GM12878 (cell line): ENCODE measurements at regions of chr1 and their contacts with region 1.

Region 1: DNA sequence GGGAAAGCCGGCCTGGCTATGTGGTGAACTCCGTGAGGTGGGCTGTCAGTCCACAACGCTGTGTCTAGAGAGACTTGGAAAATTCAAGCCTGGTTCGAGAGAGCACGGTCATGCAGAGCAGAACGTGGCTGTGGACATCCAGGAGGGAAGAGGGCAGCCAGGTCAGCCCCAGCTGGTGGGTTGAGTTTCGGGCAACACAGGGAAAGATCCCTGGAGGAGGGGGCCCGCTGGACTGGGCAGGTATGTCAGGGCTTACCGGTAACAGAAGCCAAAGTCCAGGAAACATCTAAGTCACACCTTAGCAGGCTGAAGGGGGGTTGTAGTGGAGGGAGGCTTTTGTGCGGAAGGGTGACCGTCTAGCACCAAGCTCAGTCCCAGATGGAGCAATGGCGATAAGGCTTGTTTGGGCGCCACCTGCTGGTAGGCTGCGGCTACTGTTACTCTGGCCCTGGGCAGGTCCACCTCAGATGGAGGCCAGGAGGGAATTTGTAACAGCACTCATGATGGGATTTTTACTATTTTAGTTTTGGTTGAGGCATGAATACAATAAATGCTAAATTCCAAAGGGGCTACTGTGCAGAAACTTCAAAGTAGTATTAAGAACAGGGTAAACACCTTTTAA is 143.3 kb upstream of the ZNF644 start:
- DNase-seq: peak; percentile 11
- ATAC-seq: peak; percentile 99
- H3K4me3 ChIP-seq: no peak overlapping the region
- H3K27ac ChIP-seq: no peak overlapping the region
- H3K4me1 ChIP-seq: no peaks in the 10 kb centered on the region
- H3K27me3 ChIP-seq: no peaks in the 10 kb centered on the region; a peak in 1 of 4 replicates
- CTCF ChIP-seq: peak; percentile 92 to 99 (median 95)
- EP300 ChIP-seq: no peak
- POLR2A ChIP-seq: no peak
- RAD21 ChIP-seq: peak; percentile 88

Region 2: DNA sequence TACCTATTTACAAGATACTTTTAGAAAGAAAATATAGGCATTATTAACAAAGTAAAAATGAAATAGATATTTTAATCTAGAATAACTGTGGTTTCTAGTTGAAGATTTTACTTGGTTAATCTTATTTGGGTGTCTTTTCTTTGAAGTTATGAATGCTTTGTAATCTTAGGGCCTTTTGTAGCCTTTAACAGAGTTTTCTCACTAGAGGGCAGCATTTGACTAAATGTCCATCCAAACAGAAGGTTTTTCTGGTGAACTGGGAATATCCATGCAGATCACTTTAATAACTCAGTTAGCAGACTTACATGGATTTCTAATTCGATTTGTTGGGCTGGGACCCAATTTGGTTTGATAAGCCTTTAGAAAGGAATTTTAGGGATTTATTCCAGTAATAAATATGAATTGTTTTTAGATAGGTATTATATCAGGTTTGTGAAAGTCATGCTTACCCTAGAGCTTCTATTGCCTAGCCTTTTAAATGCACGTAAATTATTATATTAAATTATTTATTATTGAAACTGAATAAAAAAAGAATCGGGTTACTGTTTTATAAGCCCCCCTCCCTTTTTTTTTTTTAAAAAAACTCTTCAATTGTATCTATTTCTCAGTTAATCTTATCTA is 1050.5 kb before region 1 on chr1:
- CTCF ChIA-PET with region 1: interaction called, 18 read pairs
- POLR2A ChIA-PET with region 1: no interaction called
- RAD21 ChIA-PET with region 1: interaction called, 13 read pairs
- SMC1A ChIA-PET with region 1: interaction called, 10 read pairs
- in situ Hi-C with region 1: loop called (anchors 25 kb)
- intact Hi-C with region 1: loop called (anchors 5 kb)
- DNase-seq: peak; percentile 8
- ATAC-seq: peak; percentile 65
- H3K4me3 ChIP-seq: no peak overlapping the region
- H3K27ac ChIP-seq: no peak overlapping the region
- H3K4me1 ChIP-seq: no peaks in the 10 kb centered on the region
- H3K27me3 ChIP-seq: no peaks in the 10 kb centered on the region
- CTCF ChIP-seq: peak; percentile 55 to 73 (median 72); a peak in 5 of 6 replicates
- EP300 ChIP-seq: no peak
- POLR2A ChIP-seq: no peak
- RAD21 ChIP-seq: peak; percentile 93

Region 3: DNA sequence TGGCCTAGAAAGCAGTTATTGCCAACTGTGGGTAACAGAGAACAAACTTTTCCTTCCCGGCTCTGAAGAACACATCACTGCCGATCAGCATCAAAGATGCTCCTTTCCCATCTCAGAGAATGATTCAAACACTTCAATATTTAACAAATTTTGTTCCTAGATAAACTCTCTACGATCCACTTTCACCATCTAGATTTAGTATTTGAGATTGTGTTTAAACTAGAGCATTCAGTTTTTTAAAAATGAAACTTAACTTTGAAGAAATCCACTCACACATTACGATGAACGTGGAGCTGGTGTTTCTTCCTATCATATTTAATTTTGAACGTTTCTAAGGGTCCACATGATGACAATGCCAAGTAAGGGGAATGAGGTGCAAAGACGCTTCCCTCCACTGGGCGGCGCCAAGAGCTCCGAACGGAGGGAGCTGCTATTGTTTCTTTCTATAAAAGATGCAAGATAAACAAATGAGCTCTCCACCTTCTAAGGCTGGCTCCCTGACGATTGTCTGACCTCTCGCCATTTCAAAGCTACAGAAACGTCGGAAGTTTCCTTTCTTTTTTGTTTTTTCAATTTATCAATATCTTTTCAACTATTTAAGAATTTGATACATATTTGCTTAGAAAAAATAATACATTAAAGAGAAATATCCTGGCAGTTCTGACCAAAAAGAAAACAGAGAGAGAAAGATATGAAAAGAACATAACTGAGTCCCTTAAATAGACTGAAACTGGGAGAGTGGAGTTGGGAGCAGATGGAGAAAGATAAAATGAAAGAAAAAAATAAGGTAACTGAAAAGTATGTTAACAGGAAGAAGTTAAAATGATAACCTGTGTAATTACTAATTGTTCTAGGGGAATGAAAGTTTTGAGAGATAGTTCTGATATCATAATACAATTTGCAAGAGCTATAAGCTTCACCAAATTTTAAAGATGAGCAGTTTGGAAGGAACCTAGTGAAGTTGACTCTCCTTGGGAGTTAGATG is 443.6 kb before region 1 on chr1:
- CTCF ChIA-PET with region 1: interaction called, 61 read pairs
- POLR2A ChIA-PET with region 1: no interaction called
- RAD21 ChIA-PET with region 1: interaction called, 28 read pairs
- SMC1A ChIA-PET with region 1: interaction called, 47 read pairs
- in situ Hi-C with region 1: loop called (anchors 5 kb)
- intact Hi-C with region 1: loop called (anchors 1 kb)
- DNase-seq: no peak
- ATAC-seq: peak; percentile 89
- H3K4me3 ChIP-seq: no peak overlapping the region
- H3K27ac ChIP-seq: no peak overlapping the region
- H3K4me1 ChIP-seq: no peaks in the 10 kb centered on the region
- H3K27me3 ChIP-seq: peaks cover 11 to 24% of the 10 kb centered on the region in 2 experiments
- CTCF ChIP-seq: peak; percentile 87 to 91 (median 91)
- EP300 ChIP-seq: no peak
- POLR2A ChIP-seq: no peak
- RAD21 ChIP-seq: peak; percentile 72

Region 4: DNA sequence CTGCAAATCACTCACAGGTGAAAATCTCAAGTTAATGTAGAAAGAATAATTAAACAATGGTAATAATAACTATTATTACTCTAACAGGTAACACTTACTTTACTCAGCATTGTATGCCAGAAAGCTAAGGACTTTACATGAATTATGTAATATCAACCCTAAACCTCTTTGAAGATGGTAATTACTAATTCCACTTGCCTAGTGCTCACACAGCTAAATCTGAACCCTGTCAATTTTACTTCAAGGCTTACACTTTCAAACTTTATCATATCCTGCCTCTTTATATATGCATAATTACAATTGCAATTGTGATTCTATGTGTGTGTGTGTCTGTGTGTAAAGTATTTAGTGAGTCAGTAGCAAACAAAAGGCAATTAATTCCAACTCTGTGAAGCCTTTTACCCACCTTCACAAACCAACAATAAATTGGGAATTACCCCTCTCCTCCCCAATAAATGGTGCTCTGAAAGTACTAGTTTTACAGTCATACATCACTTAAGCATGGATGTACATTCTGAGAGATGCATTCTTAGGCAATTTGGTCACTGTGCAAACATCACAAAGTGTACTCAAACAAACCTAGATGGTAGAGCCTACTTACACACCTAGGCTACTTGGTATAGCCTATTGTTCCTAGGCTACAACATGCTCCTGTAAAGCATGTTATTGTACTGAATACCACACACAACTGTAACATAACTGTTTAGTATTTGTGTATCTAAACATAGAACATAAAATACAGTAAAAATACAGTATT is 149.2 kb before region 1 on chr1:
- CTCF ChIA-PET with region 1: interaction called, 62 read pairs
- POLR2A ChIA-PET with region 1: no interaction called
- RAD21 ChIA-PET with region 1: interaction called, 46 read pairs
- SMC1A ChIA-PET with region 1: interaction called, 31 read pairs
- in situ Hi-C with region 1: no loop called
- intact Hi-C with region 1: loop called (anchors 1 kb)
- DNase-seq: no peak
- ATAC-seq: peak; percentile 15
- H3K4me3 ChIP-seq: peak overlapping the region; percentile 38; the same call in 1 of the 2 replicates
- H3K27ac ChIP-seq: no peak overlapping the region; the same call in 1 of the 2 replicates
- H3K4me1 ChIP-seq: no peaks in the 10 kb centered on the region
- H3K27me3 ChIP-seq: no peaks in the 10 kb centered on the region
- CTCF ChIP-seq: no peak
- EP300 ChIP-seq: no peak
- POLR2A ChIP-seq: no peak
- RAD21 ChIP-seq: no peak

Region 5: DNA sequence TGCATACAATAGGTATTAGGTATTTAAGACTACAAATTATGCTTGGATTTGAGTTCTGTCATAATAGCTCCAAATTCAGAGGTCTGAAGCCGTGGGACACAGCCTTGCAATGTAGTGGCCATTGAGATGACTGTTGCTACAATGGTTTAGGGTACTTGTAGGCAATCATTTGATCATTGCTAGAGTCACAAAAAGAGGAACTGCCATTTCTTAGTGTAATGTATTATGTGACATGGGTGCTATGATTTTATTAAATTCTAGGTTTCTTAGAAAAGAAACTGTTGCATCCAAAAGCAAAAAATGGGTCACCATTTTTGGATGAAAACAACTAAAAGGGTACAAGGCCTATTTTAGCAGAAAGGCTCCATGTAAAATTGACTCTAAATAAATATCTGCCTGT is 13.4 kb before region 1 on chr1:
- CTCF ChIA-PET with region 1: interaction called, 26 read pairs
- POLR2A ChIA-PET with region 1: no interaction called
- RAD21 ChIA-PET with region 1: no interaction called
- SMC1A ChIA-PET with region 1: no interaction called
- in situ Hi-C with region 1: no loop called
- intact Hi-C with region 1: no loop called
- DNase-seq: no peak
- ATAC-seq: no peak
- H3K4me3 ChIP-seq: no peak overlapping the region
- H3K27ac ChIP-seq: no peak overlapping the region
- H3K4me1 ChIP-seq: no peaks in the 10 kb centered on the region
- H3K27me3 ChIP-seq: no peaks in the 10 kb centered on the region; a peak in 2 of 4 replicates
- CTCF ChIP-seq: no peak
- EP300 ChIP-seq: no peak
- POLR2A ChIP-seq: no peak
- RAD21 ChIP-seq: no peak

Region 6: GRCh38 chr1:91924146-91924545 is 759.0 kb after region 1 on chr1:
- CTCF ChIA-PET with region 1: interaction called, 10 read pairs
- POLR2A ChIA-PET with region 1: no interaction called
- RAD21 ChIA-PET with region 1: interaction called, 3 read pairs
- SMC1A ChIA-PET with region 1: interaction called, 3 read pairs
- in situ Hi-C with region 1: loop called (anchors 10 kb)
- intact Hi-C with region 1: loop called (anchors 5 kb)
- DNase-seq: no peak
- ATAC-seq: no peak
- H3K4me3 ChIP-seq: no peak overlapping the region
- H3K27ac ChIP-seq: no peak overlapping the region
- H3K4me1 ChIP-seq: no peaks in the 10 kb centered on the region
- H3K27me3 ChIP-seq: no peaks in the 10 kb centered on the region
- CTCF ChIP-seq: no peak
- EP300 ChIP-seq: no peak
- POLR2A ChIP-seq: no peak
- RAD21 ChIP-seq: no peak